Cardiac septum (tissue), 1 donor: ENCODE measurements at regions of chr22 and their contacts with region 1.

Region 1: DNA sequence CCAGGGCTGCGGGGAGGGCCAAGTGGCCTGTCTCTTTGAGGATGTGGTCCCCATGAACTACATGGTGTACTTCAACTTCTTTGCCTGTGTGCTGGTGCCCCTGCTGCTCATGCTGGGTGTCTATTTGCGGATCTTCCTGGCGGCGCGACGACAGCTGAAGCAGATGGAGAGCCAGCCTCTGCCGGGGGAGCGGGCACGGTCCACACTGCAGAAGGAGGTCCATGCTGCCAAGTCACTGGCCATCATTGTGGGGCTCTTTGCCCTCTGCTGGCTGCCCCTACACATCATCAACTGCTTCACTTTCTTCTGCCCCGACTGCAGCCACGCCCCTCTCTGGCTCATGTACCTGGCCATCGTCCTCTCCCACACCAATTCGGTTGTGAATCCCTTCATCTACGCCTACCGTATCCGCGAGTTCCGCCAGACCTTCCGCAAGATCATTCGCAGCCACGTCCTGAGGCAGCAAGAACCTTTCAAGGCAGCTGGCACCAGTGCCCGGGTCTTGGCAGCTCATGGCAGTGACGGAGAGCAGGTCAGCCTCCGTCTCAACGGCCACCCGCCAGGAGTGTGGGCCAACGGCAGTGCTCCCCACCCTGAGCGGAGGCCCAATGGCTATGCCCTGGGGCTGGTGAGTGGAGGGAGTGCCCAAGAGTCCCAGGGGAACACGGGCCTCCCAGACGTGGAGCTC is 13.5 kb downstream of the ADORA2A start:
- DNase-seq: peak; percentile 73

Region 2: DNA sequence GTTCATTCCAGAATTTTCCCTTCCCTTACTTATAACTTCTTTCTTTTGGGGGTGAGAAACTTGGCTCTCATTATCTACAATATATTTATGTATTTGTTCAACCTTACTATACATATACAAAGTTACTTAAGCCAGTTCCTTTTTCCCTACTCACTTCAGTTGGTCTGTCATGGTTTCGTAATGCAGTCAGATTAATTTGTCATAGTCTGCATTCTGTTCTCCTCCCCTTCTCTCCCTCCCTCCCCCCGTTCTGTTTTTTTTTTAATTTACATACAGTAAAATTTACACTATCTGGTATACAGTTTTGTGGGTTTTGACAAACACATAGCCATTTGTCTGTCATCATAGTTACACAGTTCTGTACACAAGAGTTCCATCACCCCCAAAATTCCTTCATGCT is 85.3 kb before region 1 on chr22:
- intact Hi-C with region 1: no loop called
- DNase-seq: no peak

Region 3: GRCh38 chr22:24486501-24486921 is 45.6 kb after region 1 on chr22:
- intact Hi-C with region 1: loop called (anchors 5 kb)
- DNase-seq: no peak

Region 4: DNA sequence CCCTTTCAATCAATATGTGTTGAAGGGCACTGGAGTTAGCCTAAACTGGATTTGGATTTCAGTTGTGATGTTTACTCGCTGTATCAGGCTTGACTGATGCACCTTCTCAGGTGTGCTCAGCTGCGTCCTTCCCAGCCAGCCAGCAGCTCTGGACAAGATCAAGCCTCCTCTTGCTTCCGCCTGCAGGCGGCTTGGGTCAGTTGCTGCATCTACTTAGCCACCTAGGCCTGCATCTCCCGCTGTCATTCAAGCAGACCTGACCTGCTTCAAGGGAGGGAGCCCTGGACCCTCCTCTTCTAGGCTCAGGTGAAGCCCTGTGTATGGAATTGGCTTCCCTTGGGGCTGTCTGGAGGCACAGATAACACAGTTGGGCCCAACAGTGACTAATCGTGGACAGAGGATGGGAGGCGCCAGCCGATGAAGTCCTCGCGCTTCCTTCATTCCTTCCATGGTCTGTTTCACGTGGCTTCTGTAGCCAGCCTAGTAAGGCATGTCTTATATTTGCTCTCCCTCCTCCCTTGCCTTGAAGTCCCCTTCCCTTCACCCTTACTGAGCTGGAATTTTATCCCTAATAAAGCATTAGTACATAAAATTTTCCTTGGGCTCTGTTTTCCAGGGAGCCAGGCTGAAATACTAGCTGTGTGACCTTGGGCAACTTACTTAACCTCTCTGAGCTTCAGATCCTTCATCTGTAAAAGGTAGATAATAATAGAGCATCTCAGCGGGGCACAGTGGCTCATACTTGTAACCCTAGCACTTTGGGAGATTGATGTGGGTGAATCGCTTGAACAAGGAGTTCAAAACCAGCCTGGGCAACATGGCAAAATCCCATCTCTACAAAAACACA is 507.7 kb after region 1 on chr22:
- intact Hi-C with region 1: no loop called
- DNase-seq: no peak